ENCODE measurements at regions of chr13 and their contacts with region 1.

Region 1: DNA sequence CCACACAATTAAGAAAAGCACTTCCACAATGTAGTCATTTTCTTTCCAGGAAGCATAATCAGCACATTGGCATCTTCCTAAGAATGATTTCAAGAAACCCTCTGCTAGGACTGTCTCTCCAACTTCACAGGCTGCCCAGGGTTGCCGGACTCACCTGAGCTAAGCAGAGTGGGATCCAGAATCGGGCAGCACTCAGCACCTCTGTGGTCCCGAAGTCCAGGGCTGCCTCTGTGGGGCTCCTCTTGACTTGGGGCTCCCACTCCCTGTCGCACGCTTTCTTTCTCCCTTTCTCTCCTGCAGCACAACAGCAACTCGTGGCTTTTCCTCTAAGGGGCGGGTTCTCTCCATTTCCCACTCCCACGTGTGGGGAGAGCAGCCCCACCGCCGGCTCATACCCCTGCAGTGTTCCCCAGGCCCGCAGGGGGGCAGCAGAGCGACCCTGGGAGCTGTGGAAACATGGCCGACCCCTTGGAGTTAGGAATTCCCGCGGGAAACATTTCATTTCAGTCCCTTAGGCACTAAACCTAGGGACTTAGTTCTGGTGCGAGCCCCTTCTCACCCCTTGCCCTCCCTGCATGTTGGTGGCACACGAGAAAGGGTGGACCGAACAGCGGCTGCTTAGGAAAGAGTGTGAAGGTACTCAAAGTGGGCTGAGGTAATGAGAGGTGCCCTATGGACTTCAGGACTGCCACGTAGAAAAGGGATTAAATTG is at the start of gene TMEM272:
- DNase-seq: peak; percentile 60
- H3K4me3 ChIP-seq: no peak within 1 kb of the TSS
- H3K27ac ChIP-seq: no peak within 1 kb of the TSS
- H3K4me1 ChIP-seq: peaks cover 9% of the 10 kb centered on the region
- H3K27me3 ChIP-seq: peaks cover 6 to 11% of the 10 kb centered on the region in 2 experiments
- CTCF ChIP-seq: peak; percentile 93 to 97
- POLR2A ChIP-seq: no peak
- total RNA-seq, gene TMEM272: not detected in 2 replicates

Region 2: DNA sequence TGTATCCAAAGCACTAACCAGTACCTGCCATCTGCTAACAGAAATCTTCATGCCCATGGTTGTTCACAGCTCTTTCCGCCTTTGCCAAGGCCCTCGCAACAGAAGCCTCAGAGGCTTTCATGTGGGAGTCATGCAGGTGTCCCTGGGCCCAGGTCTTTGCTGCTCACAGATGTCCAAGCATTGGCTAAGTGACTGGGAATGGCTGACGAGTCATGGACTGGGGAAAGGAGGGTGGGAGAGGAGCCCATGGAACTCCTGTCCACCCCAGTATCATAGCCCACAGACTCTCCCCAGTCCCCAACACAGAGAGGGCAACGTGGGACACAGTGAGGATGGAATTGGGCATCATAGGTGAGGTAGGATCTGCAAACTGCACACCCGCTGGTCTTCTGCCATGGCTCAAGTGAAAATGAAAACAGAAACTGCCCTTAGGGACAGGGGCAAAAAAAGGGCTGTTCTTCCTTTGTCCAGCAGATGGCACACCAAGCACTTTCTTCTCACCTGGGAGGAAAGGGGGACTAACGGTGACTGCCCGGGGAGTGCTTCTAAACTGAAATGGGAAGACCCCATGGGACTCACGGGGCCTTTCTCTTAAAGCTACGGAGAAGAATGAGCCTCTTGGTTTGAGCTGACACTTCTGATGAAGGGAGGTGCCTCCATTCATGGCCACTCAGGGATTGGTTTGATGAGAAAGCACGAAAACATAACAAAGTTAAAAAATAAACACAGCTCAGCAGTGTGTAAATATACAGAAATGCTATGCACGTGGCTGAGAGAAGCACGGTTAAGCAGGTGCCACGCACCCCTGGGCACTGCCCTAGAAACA is 30.0 kb before region 1 on chr13:
- CTCF ChIA-PET with region 1: interaction called, 11 read pairs
- POLR2A ChIA-PET with region 1: no interaction called
- dilution Hi-C with region 1: no loop called
- intact Hi-C with region 1: loop called (anchors 1 kb)
- DNase-seq: peak; percentile 63
- H3K4me3 ChIP-seq: peak overlapping the region in 1 of 3 experiments; percentile 23
- H3K27ac ChIP-seq: no peak overlapping the region
- H3K4me1 ChIP-seq: peaks cover 6% of the 10 kb centered on the region
- H3K27me3 ChIP-seq: peaks cover 9 to 22% of the 10 kb centered on the region in 2 experiments
- CTCF ChIP-seq: peak; percentile 74 to 82
- POLR2A ChIP-seq: no peak

Region 3: GRCh38 chr13:51832471-51833152 is 12.4 kb before region 1 on chr13:
- CTCF ChIA-PET with region 1: interaction called, 15 read pairs
- POLR2A ChIA-PET with region 1: no interaction called
- dilution Hi-C with region 1: no loop called
- intact Hi-C with region 1: no loop called
- DNase-seq: peak; percentile 24
- H3K4me3 ChIP-seq: no peak overlapping the region
- H3K27ac ChIP-seq: no peak overlapping the region
- H3K4me1 ChIP-seq: no peaks in the 10 kb centered on the region
- H3K27me3 ChIP-seq: peaks cover 0 to 6% of the 10 kb centered on the region in 2 experiments
- CTCF ChIP-seq: peak in 1 of 2 donors; percentile 28
- POLR2A ChIP-seq: no peak

Measured in endothelial cell of umbilical vein (primary cell).